OCI-LY7 (cell line): ENCODE measurements at regions of chr3 and their contacts with region 1.

Region 1: DNA sequence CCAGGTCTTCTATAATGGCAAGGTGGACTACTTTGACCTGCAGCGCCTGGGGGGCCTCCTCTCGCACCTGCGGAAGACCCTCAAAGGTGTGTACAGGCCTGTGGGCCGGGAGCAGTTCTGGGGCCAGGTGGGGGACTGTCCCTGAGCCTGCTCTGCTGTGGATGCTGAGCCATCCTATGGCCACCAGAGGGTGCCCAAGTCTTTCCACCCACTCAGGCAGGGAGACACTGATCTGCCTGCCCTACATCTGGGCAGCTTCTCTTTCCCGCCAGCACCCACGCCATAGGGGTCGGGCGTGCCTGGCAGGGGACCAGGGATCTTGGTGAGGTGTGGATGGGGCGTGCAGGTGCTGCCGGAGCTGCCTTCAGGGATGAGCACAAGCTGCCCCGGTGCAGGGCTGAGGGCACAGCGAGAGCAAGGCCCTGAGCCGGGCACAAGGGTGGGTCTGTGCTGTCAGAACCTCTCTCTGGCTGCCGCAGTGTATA is 14.1 kb downstream of the RNF123 start:
- DNase-seq: peak; percentile 76
- H3K4me3 ChIP-seq: no peak overlapping the region
- H3K27ac ChIP-seq: no peak overlapping the region
- H3K4me1 ChIP-seq: no peaks in the 10 kb centered on the region
- CTCF ChIP-seq: peak; percentile 81

Region 2: DNA sequence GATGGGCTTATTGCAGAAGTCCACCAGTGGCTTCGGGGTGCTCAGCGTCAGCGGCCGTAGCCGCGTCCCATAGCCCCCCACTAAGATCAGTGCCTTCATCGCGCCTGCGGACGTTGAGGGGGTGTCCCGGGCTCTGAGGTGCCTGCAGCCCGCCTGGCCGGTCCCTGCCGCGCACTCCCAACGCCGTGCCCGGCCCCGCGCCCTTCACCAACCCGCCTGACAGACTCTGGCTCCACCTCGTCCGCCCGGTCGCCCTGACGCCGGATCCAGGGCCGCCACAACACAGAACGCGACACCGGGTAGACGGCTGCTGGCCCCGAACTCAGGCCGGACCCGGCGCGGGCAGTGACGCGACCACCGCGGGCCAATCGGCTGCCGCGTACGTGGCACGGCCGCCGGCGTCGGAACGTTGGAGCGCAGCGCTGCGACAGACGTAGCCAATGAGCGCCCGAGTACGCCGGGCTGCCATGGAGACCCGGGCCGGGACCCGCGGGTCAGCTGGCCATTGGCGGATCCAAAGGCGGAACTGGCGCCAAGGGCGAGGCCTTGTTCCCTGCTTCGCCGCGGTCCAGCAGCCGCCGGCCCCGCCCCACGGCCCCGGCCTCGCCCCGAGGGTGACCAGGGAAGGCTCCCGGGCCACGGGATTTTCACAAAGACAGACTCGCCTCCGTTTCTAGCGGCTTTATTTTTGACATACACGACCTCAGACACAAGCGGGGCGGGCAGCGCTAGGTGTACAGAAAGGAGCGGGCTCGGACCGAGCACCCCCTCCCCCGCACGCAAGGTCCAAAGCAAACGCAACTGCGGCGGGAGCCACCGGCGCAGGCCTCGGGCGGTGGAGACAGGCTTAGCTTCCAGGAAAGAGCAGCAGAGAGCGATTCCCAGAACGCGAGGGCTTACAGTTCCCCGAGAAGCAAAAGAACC is 20.4 kb after region 1 on chr3 and contains the start of gene GMPPB:
- CTCF ChIA-PET with region 1: no interaction called
- POLR2A ChIA-PET with region 1: no interaction called
- intact Hi-C with region 1: loop called (anchors 1 kb)
- DNase-seq: peak; percentile 98
- H3K4me3 ChIP-seq: peak within 1 kb of the TSS; percentile 93
- H3K27ac ChIP-seq: peak within 1 kb of the TSS; percentile 74
- H3K4me1 ChIP-seq: peaks cover 50% of the 10 kb centered on the region
- CTCF ChIP-seq: no peak
- total RNA-seq, gene GMPPB: 40.7 and 43.6 TPM in 2 replicates

Region 3: GRCh38 chr3:49839193-49839809 is 135.8 kb after region 1 on chr3:
- CTCF ChIA-PET with region 1: no interaction called
- POLR2A ChIA-PET with region 1: no interaction called
- intact Hi-C with region 1: loop called (anchors 1 kb)
- DNase-seq: peak; percentile 85
- H3K4me3 ChIP-seq: no peak overlapping the region
- H3K27ac ChIP-seq: no peak overlapping the region
- H3K4me1 ChIP-seq: peaks cover 3% of the 10 kb centered on the region
- CTCF ChIP-seq: peak; percentile 97

Region 4: DNA sequence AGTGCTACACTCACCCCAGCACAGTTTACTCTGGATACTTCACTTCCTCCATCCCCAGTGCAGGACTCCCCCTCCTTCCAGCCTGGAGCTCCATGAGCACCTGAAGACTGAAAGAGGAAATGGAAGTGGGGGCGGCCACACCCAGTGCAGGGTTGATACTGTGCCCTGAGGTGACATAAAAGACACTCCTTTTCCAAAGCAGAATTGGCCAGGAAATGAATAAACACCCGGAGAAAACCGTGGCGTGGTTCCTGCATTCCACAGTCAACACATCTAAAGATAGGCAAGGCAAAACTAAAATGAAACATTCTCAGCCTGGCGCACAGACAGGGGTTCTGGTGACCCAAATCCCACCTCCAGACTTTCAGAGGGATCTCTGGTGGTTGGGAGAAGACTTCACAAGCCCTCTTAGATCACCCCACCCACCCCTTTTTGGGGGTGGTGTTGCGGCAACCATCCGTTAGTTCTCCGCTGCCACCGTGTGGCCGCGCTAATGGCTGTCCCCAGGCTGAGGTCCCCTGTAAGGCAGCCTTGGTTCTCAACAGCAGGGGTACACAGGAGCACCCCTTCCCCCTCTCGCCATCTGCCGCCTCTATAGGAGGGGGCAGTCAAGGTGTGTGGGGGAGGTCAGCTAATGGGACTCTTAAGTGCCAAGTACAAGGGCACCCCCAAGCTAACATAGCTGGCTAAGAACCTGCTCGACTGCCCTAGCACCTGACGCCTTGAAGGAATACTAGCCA is 202.7 kb after region 1 on chr3:
- CTCF ChIA-PET with region 1: interaction called, 4 read pairs
- POLR2A ChIA-PET with region 1: no interaction called
- intact Hi-C with region 1: loop called (anchors 5 kb)
- DNase-seq: peak; percentile 57
- H3K4me3 ChIP-seq: no peak overlapping the region
- H3K27ac ChIP-seq: no peak overlapping the region
- H3K4me1 ChIP-seq: peaks cover 13% of the 10 kb centered on the region
- CTCF ChIP-seq: peak; percentile 84